ENCODE measurements at regions of chr5 and their contacts with region 1.

Region 1: DNA sequence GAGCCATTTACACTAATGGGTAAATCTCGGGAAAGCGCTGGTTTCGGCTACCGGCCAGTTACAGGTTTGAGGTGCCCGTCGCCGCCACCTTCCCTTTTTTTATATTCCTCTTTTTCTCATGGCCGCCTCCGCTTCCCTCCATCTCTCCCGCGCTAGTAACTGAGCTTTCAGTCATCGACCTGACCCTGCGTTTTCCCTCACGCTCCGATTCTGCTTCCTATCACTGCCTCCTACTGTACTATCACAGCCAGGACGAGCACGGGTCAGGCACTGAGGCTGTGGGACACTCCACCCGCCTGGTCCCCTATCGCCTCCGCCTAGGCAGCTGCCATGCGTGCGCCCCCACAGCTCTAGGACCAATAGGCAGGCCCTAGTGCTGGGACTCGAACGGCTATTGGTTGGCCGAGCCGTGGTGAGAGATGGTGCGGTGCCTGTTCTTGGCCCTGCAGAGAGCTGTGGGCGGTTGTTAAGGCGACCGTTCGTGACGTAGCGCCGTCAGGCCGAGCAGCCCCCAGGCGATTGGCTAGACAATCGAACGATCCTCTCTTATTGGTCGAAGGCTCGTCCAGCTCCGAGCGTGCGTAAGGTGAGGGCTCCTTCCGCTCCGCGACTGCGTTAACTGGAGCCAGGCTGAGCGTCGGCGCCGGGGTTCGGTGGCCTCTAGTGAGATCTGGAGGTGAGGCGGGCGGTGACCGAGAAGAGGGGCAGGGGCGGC is at the start of gene HMGCR:
- DNase-seq: peak; percentile 99
- ATAC-seq: peak; percentile 95
- H3K4me3 ChIP-seq: peak within 1 kb of the TSS; percentile 92 to 97
- H3K27ac ChIP-seq: peak within 1 kb of the TSS; percentile 88
- H3K4me1 ChIP-seq: peaks cover 7 to 24% of the 10 kb centered on the region in 2 experiments; a peak in 3 of 4 replicates
- H3K27me3 ChIP-seq: no peaks in the 10 kb centered on the region
- CTCF ChIP-seq: peak in 2 of 3 experiments; percentile 39 to 41; a peak in 3 of 6 replicates
- POLR2A ChIP-seq: peak; percentile 59
- RAD21 ChIP-seq: peak; percentile 70
- total RNA-seq, gene HMGCR: 101 TPM

Region 2: GRCh38 chr5:75053304-75054133 is 283.3 kb before region 1 on chr5:
- CTCF ChIA-PET with region 1: interaction called, 5 read pairs
- POLR2A ChIA-PET with region 1: no interaction called
- RAD21 ChIA-PET with region 1: interaction called in 1 of 2 experiments, 3 read pairs
- intact Hi-C with region 1: loop called (anchors 5 kb)
- DNase-seq: no peak
- ATAC-seq: peak; percentile 67
- H3K4me3 ChIP-seq: peak overlapping the region; percentile 56 to 67
- H3K27ac ChIP-seq: no peak overlapping the region
- H3K4me1 ChIP-seq: peaks cover 3 to 21% of the 10 kb centered on the region in 2 experiments; a peak in 3 of 4 replicates
- H3K27me3 ChIP-seq: no peaks in the 10 kb centered on the region
- CTCF ChIP-seq: 0 out of 6 replicates have a peak, but pooled peaks of 1 of the 3 experiments have one; percentile 4
- POLR2A ChIP-seq: no peak
- RAD21 ChIP-seq: peak; percentile 27; the same call in 1 of the 2 replicates

Region 3: GRCh38 chr5:75236322-75237316 is 100.2 kb before region 1 on chr5 and contains the start of gene ANKRD31:
- CTCF ChIA-PET with region 1: interaction called, 6 read pairs
- POLR2A ChIA-PET with region 1: interaction called, 5 read pairs
- RAD21 ChIA-PET with region 1: no interaction called
- intact Hi-C with region 1: loop called (anchors 5 kb)
- DNase-seq: peak; percentile 22
- ATAC-seq: peak; percentile 89
- H3K4me3 ChIP-seq: peak within 1 kb of the TSS; percentile 49 to 58
- H3K27ac ChIP-seq: peak within 1 kb of the TSS; percentile 34
- H3K4me1 ChIP-seq: peaks cover 7 to 32% of the 10 kb centered on the region in 2 experiments; a peak in 3 of 4 replicates
- H3K27me3 ChIP-seq: no peaks in the 10 kb centered on the region
- CTCF ChIP-seq: peak in 2 of 3 experiments; percentile 45 to 49; a peak in 3 of 6 replicates
- POLR2A ChIP-seq: no peak
- RAD21 ChIP-seq: peak; percentile 49
- total RNA-seq, gene ANKRD31: 0.30 TPM

Region 4: GRCh38 chr5:75277463-75277862 is 59.3 kb before region 1 on chr5:
- CTCF ChIA-PET with region 1: no interaction called
- POLR2A ChIA-PET with region 1: interaction called, 3 read pairs
- RAD21 ChIA-PET with region 1: interaction called in 1 of 2 experiments, 3 read pairs
- intact Hi-C with region 1: loop called (anchors 5 kb)
- DNase-seq: peak; percentile 21
- ATAC-seq: peak; percentile 46
- H3K4me3 ChIP-seq: no peak overlapping the region
- H3K27ac ChIP-seq: no peak overlapping the region
- H3K4me1 ChIP-seq: peaks cover 5 to 40% of the 10 kb centered on the region in 2 experiments; a peak in 3 of 4 replicates
- H3K27me3 ChIP-seq: no peaks in the 10 kb centered on the region
- CTCF ChIP-seq: no peak
- POLR2A ChIP-seq: no peak
- RAD21 ChIP-seq: no peak

Region 5: GRCh38 chr5:75320341-75320740 is 16.4 kb before region 1 on chr5:
- CTCF ChIA-PET with region 1: interaction called, 9 read pairs
- POLR2A ChIA-PET with region 1: interaction called, 16 read pairs
- RAD21 ChIA-PET with region 1: interaction called, 3 to 11 read pairs
- intact Hi-C with region 1: loop called (anchors 1 kb)
- DNase-seq: no peak
- ATAC-seq: peak; percentile 5
- H3K4me3 ChIP-seq: peak overlapping the region; percentile 15 to 47
- H3K27ac ChIP-seq: peak overlapping the region; percentile 96
- H3K4me1 ChIP-seq: peaks cover 30 to 54% of the 10 kb centered on the region in 2 experiments
- H3K27me3 ChIP-seq: no peaks in the 10 kb centered on the region
- CTCF ChIP-seq: no peak
- POLR2A ChIP-seq: no peak
- RAD21 ChIP-seq: no peak

Region 6: DNA sequence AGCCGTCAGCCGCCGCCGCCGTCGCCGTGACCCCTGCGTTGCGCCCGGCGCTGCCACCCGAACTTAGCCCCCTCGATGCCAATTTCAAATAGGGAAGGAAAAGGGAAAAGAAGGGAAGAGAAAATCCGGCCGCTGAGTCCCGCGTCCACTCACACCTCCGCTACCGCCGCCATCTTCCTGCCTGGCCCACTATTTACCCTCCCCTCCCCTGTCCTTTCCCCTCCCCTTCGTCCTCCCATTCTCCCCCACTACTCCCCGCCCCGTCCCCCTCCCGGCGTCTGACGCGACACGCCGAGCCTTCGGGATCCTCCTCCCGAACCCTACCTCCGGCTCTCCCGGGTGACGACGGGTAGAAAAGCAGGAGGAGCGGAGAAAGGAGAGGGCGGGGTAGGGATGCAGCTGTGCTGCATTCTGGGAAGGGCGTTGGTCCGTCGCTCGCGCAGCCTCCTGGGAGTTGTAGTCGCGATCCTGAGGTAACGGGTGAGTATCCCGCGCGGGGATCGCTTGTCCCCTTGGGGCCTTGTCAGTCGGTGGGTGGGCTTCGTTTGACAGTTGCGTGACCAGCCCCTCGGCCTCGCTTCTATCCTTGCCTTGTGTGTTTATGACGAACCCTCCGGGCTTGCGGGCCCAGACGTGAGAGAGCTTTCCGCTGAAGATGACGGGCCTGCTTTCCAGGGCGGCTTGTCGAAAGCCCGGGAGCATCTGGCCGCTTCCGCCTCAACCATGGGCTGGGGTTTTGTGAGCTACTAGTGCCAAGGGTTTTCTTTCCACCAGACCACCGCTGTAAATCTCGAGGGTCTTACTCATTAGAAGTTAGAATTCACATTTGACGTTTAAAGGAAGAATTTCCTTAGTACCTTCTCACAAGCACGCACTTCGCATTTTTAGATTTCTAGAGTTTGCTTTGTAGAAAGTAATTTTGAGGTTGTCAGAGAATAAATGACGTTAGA is 174.9 kb after region 1 on chr5 and contains the starts of genes CERT1 and POLK:
- CTCF ChIA-PET with region 1: no interaction called
- POLR2A ChIA-PET with region 1: no interaction called
- RAD21 ChIA-PET with region 1: no interaction called
- intact Hi-C with region 1: loop called (anchors 5 kb)
- DNase-seq: peak; percentile 96
- ATAC-seq: peak; percentile 98
- H3K4me3 ChIP-seq: peak within 1 kb of the TSS; percentile 83 to 90
- H3K27ac ChIP-seq: peak within 1 kb of the TSS; percentile 63
- H3K4me1 ChIP-seq: peaks cover 7 to 18% of the 10 kb centered on the region in 2 experiments; a peak in 3 of 4 replicates
- H3K27me3 ChIP-seq: no peaks in the 10 kb centered on the region
- CTCF ChIP-seq: no peak
- POLR2A ChIP-seq: peak; percentile 55
- RAD21 ChIP-seq: no peak
- total RNA-seq, gene CERT1: 22.8 TPM
- total RNA-seq, gene POLK: 17.3 TPM

Measured in HCT116 (cell line).